Activated T-helper 1 cell treated with anti-CD3 and anti-CD28 coated beads, Interleukin-12 subunit alpha, Interleukin-12 subunit beta, Interleukin-2, Interleukin-4 antibody, amounts not matched to agents 30 ng/mL and 10 ng/mL and 1 ng/mL, durations not matched to agents 14 hours and 24 hours and 36 hours (primary cell): ENCODE measurements at regions of chrX and their contacts with region 1.

Region 1: DNA sequence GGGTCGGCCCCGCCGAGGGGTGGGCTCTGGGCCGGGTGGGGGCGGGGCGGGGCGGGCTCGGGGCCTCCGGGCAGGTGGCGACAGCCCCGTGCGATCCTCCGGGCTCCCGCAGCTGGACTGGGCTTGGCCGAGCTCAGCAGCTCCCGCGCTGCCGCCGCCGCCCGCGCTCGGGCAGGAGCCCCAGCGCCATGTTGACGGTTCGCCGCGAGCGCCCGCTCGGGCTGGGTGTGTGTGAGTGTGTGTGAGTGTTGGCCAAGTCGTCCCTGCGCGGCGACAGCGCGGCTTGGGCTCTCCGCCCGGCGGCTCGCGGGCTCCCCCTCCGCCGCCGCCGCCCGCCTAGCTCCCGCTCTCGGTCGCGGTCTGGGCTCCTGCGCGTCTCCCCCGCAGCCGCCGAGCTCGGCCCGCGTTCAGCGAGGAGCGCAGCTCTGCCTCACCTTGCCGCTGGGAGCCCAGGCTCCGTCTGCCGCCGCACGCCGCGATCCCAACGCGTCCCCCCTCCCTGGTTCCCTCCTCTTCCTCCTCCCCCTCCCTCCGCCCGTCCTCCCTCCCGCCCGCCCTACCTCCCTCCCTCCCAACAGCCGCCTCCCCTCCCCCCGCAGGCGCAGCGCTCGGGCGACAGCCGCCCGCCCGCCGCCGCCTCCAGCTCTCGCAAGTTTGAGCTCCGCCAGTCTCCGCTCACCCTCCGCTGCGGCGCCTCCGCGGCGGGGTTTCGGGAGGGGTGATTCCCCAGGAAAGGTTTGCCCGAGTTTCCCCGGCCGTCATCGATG is at the start of gene BCOR:
- DNase-seq: peak; percentile 60
- H3K4me3 Mint-ChIP-seq: peak within 1 kb of the TSS; percentile 89
- H3K27ac Mint-ChIP-seq: peak within 1 kb of the TSS; percentile 88
- H3K4me1 Mint-ChIP-seq: peaks cover 18% of the 10 kb centered on the region
- H3K27me3 Mint-ChIP-seq: no peaks in the 10 kb centered on the region
- total RNA-seq, gene BCOR: 65.2 and 72.0 TPM in 2 replicates

Region 2: DNA sequence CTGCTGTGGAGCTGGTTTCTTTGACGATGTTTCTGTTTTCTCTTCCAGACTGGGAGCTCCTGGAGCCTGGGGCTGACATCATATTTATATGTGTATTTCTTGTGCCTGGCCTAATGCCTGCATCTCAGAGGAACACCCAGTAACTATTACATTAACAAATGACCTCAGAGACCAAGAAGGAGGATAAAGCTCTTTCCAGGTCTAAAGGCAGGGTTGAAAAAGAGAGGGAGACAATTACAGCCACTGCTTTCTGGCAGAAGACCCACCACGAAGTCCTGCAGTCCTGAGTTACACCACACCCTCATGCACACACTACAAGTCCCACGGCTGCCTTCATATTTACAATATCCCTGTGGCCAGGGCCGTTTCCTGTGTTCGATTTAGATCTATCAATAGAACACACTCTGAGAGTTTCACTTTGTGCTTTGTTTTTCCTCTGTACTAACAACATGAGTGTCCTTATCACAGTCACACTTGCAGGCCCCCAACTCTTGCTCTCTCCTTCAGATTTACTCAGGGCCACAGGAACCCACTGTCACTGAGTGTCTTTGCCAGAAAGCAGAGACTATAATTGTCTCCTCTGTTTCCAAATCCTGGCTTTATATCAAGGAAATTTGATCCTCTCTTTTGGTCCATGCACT is 760.9 kb before region 1 on chrX:
- intact Hi-C with region 1: loop called (anchors 10 kb)
- DNase-seq: peak; percentile 2
- H3K4me3 Mint-ChIP-seq: peak overlapping the region; percentile 51
- H3K27ac Mint-ChIP-seq: peak overlapping the region; percentile 86
- H3K4me1 Mint-ChIP-seq: peaks cover 34% of the 10 kb centered on the region
- H3K27me3 Mint-ChIP-seq: no peaks in the 10 kb centered on the region

Region 3: GRCh38 chrX:39642082-39642481 is 455.6 kb before region 1 on chrX:
- intact Hi-C with region 1: no loop called
- DNase-seq: no peak
- H3K4me3 Mint-ChIP-seq: no peak overlapping the region
- H3K27ac Mint-ChIP-seq: no peak overlapping the region
- H3K4me1 Mint-ChIP-seq: peaks cover 26% of the 10 kb centered on the region
- H3K27me3 Mint-ChIP-seq: no peaks in the 10 kb centered on the region

Region 4: DNA sequence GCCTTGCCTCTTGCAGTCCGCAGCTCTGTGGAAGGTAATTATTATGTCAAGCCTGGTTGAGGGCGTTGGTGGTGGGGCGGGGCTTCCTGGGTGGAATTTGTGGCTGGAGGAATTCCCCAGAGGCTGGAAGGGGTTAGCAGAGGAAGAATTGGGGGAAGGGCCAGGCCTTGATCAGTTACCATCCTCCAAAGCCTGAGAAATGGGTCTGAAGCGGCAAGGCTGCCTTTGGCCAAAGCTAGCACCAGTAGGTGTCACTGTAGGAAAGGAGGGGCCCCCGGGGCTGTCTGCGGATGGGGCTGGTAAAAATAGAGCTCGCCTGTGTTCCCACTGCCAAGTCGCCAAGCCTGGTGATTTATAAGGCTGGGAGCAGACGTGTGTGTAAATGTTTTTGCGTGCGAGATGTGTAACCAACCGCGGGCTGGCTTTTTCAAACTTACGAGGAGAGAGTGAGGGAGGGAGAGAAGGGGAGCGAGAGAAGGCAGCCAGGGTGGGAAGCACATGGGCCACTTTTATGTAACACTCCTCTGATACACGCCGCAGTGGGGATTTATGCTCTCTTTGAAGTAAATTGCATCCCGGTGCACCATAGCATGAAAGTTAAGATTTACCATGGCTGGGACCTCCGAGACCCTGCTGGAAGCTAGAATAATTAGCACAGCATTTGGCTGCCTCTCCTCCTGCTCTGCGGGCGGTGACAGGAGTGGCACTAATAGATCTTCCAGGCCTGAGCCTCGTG is 366.9 kb before region 1 on chrX:
- intact Hi-C with region 1: loop called (anchors 2 kb)
- DNase-seq: peak; percentile 31
- H3K4me3 Mint-ChIP-seq: peak overlapping the region; percentile 54
- H3K27ac Mint-ChIP-seq: peak overlapping the region; percentile 84
- H3K4me1 Mint-ChIP-seq: peaks cover 30% of the 10 kb centered on the region
- H3K27me3 Mint-ChIP-seq: no peaks in the 10 kb centered on the region

Region 5: DNA sequence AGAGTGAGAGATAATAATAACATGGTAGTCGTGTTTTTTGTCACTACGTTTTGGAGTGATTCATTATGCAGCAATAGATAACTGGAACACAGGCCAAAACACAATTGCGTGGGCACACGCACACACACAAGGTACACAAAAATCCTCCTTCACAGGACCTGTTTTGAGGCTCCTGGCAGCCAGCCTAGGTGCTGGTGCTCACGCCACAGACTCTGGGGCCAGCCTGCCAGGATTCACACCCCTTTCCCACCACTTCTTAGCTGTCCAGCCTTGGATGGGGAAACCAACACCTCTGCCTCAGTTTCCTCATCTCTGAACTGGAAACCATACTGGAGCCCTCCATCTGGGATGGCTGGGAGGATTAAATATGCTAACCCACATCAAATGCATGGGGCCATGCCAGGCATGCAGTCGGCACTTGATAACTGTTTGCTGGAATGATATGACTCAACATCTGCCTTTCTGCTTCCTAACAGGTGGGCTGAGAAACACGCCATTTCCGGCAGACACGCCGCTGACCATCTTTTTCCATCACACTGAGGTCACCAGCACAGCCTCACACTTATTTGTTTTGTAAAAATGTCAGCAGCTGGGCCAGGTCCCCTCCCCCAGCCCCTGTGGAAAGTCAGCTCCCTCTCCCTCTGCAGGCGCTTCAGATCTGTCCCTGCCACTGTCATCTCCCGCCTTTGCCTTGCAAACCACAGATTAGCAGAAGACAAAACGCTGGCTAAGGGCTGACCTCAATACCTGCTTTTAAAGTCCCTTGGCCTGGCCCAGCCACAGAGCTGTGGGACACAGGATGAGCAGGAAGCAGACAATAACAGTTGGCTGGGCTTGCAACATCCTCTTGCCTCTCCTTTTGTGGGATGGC is 237.5 kb before region 1 on chrX:
- intact Hi-C with region 1: loop called (anchors 1 kb)
- DNase-seq: peak; percentile 79
- H3K4me3 Mint-ChIP-seq: peak overlapping the region; percentile 70
- H3K27ac Mint-ChIP-seq: peak overlapping the region; percentile 98
- H3K4me1 Mint-ChIP-seq: peaks cover 60% of the 10 kb centered on the region
- H3K27me3 Mint-ChIP-seq: no peaks in the 10 kb centered on the region

Region 6: GRCh38 chrX:40013266-40014195 is 84.1 kb before region 1 on chrX:
- intact Hi-C with region 1: loop called (anchors 2 kb)
- DNase-seq: peak; percentile 43
- H3K4me3 Mint-ChIP-seq: peak overlapping the region; percentile 74
- H3K27ac Mint-ChIP-seq: peak overlapping the region; percentile 75
- H3K4me1 Mint-ChIP-seq: peaks cover 11% of the 10 kb centered on the region
- H3K27me3 Mint-ChIP-seq: peaks cover 6% of the 10 kb centered on the region

Region 7: DNA sequence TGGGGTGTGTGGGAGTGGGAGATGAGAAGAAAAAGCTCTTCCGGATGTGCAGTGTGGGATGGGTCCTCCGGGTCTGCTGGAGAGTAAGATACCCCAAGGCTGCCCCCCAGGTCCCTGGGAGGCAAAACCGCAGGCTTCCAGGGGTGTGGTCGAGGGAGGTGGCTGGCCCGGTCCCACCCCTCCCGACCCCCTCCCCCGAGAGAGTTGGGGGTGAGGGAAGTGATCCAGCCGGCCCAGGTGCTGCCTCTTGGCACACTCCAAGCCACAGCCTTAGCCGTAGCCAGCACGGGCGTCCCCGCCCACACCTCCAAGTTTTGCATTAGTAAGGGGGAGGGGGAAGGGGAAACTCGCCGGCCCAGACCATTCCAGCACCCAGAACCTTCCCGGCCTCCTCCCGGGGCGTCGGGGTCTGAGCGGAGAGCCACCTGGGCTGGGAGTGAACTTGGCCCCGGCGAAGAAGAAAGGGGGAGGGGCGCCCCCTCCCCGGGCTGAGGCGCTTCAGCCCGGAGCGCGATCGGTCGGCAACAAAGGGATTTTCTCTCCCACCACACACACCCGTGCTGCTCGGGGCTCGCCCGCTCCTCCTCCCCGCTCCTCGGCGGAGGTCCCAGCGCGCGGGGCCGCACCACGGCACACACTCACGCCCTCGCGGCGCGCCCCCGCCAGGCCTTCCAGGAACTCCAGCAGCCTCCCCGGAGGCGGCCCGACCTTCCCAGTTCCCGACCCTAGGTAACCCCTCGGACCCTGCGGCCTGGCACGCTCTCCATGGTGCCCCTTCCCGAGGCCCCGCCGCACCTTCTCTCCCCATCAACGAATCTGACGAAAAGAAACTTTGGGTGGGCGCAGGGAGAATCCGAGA is 14.3 kb before region 1 on chrX:
- intact Hi-C with region 1: no loop called
- DNase-seq: no peak
- H3K4me3 Mint-ChIP-seq: peak overlapping the region; percentile 76
- H3K27ac Mint-ChIP-seq: no peak overlapping the region
- H3K4me1 Mint-ChIP-seq: peaks cover 34% of the 10 kb centered on the region
- H3K27me3 Mint-ChIP-seq: no peaks in the 10 kb centered on the region

Region 8: DNA sequence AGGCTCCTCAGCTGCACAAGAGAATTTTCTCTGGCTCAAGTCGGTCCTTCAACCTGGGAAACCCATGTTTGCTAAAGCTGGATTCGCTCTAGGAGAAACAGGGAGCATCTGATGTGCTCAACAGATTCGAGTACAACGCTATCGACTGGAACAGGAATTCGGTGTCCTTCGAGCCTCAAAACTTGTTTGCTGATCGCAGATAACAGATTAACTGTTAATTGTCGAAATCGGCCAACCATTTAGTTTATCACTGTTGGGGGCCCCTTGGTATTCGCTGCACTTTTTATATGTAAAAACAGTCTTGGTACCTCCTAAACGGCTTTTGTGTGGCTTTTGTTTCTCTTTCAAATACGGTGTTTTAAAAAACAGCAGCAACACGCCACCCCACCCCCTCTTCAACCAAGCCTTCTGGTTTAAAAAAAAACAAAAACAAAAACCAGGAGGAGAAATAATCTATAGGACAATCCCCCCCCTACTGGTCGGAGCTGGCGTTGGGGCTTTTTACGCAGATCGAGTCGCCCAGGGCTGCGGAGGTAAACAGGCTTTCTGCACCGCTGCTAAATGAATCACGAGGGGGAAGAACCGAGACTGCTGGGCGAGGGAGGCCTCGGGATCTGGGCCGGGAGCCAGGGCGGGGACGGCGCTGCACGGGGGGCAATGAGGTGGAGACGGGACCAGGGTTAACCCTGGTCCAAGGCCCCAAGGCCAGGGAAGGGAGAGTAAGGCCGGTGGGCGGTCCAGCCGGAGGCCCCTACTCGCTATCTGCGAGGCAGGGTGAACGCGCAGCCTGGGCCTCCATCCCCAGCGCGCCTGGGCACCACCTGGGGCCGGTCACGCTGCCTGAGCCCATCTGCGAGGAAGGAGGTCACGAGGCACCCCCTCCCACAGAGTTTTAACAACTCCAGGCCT is 71.8 kb after region 1 on chrX:
- intact Hi-C with region 1: loop called (anchors 1 kb)
- DNase-seq: peak; percentile 73
- H3K4me3 Mint-ChIP-seq: peak overlapping the region; percentile 88
- H3K27ac Mint-ChIP-seq: peak overlapping the region; percentile 96
- H3K4me1 Mint-ChIP-seq: peaks cover 62% of the 10 kb centered on the region
- H3K27me3 Mint-ChIP-seq: no peaks in the 10 kb centered on the region

Region 9: DNA sequence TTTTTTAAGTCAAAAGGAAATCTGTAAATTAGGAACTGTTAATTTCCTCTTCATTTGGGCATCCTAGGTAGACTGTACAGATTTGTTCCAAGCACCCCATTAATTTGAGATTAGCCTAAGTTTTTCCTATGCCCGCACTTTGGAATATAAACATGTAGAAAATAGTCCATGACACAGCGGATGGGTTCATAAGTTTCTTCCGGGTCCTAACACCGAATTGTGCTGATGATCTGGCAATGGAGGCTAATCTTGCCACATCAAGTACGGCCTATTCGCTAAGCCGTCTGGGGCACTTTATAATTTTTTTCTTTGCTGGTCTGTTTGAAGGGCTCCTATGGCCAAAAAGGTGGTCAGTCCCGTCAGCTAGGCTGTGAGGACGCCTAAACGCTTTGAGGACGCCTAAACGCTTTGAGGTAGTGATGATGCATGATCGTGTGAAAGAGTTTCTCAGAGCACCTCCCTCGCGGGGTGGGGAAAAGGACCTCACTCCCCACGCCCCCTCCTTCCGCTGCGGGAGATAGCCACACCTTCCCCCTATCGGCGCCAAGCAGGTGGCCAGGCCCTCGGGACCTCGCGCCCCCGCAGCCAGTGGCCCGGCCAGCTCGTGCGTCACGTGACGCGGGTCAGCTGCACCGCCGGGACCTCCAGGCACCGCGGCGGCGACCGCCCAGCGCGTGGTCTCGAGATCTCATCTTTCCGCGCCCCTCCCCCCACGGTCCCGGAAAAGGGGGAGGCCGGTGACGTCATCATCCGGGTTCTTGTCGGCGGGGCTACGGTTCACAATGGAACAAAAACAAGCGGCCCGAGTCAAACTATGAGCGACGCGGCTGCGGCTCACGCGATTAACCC is 986.6 kb after region 1 on chrX:
- intact Hi-C with region 1: loop called (anchors 10 kb)
- DNase-seq: peak; percentile 85
- H3K4me3 Mint-ChIP-seq: peak overlapping the region; percentile 90
- H3K27ac Mint-ChIP-seq: peak overlapping the region; percentile 99
- H3K4me1 Mint-ChIP-seq: peaks cover 12% of the 10 kb centered on the region
- H3K27me3 Mint-ChIP-seq: no peaks in the 10 kb centered on the region